ENCODE measurements at regions of chr1 and their contacts with region 1.

Region 1: GRCh38 chr1:170765712-170766330 is 101.9 kb downstream of the PRRX1 start:
- DNase-seq: no peak
- ATAC-seq: peak in 6 of 8 donors; percentile 42 to 67 (median 61)
- H3K4me3 ChIP-seq: no peak overlapping the region
- H3K27ac ChIP-seq: no peak overlapping the region
- H3K4me1 ChIP-seq: peaks cover 0 to 4% (median 0%) of the 10 kb centered on the region in 9 donors
- H3K27me3 ChIP-seq: no peaks in the 10 kb centered on the region
- CTCF ChIP-seq: peak; percentile 25 to 72 (median 57)

Region 2: GRCh38 chr1:169933984-169934725 is 831.7 kb before region 1 on chr1:
- intact Hi-C with region 1: loop called in 4 of 10 experiments (anchors 5 to 10 kb)
- DNase-seq: no peak
- ATAC-seq: no peak
- H3K4me3 ChIP-seq: no peak overlapping the region
- H3K27ac ChIP-seq: no peak overlapping the region
- H3K4me1 ChIP-seq: peaks cover 0 to 13% (median 0%) of the 10 kb centered on the region in 9 donors
- H3K27me3 ChIP-seq: no peaks in the 10 kb centered on the region
- CTCF ChIP-seq: no peak

Region 3: DNA sequence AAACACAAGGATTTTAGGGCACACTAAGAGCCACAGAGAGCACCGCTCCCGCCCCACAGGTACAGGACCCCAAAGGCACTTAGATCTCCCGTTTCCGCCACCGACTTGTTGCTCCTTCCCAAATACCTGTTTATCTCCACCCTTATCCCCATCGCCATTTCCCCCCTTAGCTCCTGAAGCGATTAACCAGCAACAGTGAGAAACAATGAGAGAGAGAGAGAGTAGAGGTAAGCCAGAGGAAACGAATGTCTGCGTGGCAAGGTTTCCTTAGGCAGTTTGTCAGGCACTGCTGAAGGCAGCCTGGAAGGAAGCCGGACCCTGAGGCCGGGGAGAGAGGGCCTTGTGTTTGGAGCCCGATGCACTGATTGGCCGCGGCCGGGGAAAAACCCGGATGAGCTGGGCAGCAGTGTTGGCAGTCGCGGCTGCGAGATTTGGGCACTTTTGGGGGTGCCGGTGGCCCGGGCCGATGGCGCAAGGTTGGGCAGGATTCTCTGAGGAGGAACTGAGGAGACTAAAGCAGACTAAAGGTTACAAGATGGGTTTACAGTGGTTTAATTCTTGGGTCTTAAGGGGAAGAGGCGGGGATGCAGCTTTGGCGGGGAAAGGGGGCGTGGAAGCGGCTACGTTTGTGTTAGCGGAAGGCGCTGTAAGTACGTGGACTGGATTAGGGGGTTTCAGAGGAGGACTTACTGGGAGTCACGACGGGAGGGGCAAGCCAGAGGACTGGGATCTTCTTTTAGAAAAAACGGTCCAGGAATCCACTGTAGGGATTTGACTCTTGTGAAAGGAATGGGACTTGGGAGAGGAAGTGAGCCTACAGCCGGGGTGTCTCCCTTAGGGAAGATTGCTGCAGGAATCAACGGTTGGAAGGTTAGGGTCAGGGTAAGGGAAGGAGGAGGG is 233.8 kb before region 1 on chr1 and contains the start of gene GORAB:
- intact Hi-C with region 1: loop called in 1 of 10 experiments (anchors 10 kb)
- DNase-seq: peak; percentile 90 to 93
- ATAC-seq: peak; percentile 97 to 99 (median 99)
- H3K4me3 ChIP-seq: peak within 1 kb of the TSS; percentile 41 to 83 (median 68)
- H3K27ac ChIP-seq: peak within 1 kb of the TSS; percentile 78 to 96 (median 94)
- H3K4me1 ChIP-seq: peaks cover 0 to 38% (median 28%) of the 10 kb centered on the region in 9 donors
- H3K27me3 ChIP-seq: no peaks in the 10 kb centered on the region
- CTCF ChIP-seq: no peak
- total RNA-seq, gene GORAB: 5.6 to 14.4 (median 9.4) TPM

Region 4: DNA sequence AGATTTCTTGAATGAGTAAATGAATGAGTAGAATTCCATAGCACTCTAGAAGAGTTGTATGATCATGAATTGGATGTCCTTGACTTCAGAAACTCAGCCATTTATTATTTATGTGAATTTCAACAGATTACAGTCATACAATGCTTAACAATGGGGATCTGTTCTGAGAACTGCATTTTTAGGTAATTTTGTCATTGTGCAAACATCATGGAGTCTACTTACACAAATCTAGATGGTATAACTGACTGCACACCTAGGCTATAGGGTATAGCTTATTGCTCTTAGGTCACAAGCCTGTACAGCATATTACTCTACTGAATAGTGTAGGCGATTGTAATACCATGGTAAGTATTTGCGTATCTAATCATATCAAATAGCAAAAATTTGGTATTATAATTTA is 42.3 kb before region 1 on chr1:
- intact Hi-C with region 1: loop called in 1 of 10 experiments (anchors 1 kb)
- DNase-seq: no peak
- ATAC-seq: no peak
- H3K4me3 ChIP-seq: no peak overlapping the region
- H3K27ac ChIP-seq: no peak overlapping the region
- H3K4me1 ChIP-seq: peaks cover 0 to 20% (median 0%) of the 10 kb centered on the region in 9 donors
- H3K27me3 ChIP-seq: no peaks in the 10 kb centered on the region
- CTCF ChIP-seq: no peak

Region 5: DNA sequence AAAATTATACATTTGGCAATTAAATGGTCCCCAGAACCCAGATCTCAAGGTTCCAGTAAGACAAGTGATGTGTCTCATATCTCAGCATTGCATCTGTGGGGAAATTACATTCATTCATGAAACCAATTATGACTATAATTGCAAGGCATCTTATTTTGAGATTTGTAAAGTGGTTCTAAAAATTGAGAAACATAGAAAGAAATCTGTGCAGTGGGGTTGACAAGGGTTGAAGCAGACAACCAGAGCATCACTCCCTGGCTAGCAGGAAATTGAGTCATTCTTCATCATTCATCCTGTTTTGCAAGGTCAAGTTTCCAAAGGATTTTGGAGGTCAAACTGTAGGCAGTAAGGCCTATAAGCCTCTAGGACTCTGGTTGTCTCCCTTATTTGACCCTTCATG is 144.5 kb after region 1 on chr1:
- intact Hi-C with region 1: no loop called
- DNase-seq: no peak
- ATAC-seq: no peak
- H3K4me3 ChIP-seq: no peak overlapping the region
- H3K27ac ChIP-seq: peak overlapping the region in 1 of 10 donors; percentile 51
- H3K4me1 ChIP-seq: no peaks in the 10 kb centered on the region
- H3K27me3 ChIP-seq: no peaks in the 10 kb centered on the region
- CTCF ChIP-seq: no peak

Measured in heart right ventricle (tissue), 16 donors.